ENCODE measurements at regions of chr1 and their contacts with region 1.

Region 1: GRCh38 chr1:110766025-110766647 is 91.4 kb upstream of the KCNA3 start:
- DNase-seq: peak; percentile 58
- H3K4me3 Mint-ChIP-seq: peak overlapping the region; percentile 40
- H3K27ac Mint-ChIP-seq: no peak overlapping the region
- H3K4me1 Mint-ChIP-seq: peaks cover 3% of the 10 kb centered on the region
- H3K27me3 Mint-ChIP-seq: peaks cover 12% of the 10 kb centered on the region

Region 2: GRCh38 chr1:110524311-110525251 is 241.6 kb before region 1 on chr1:
- CTCF ChIA-PET with region 1: interaction called, 25 read pairs
- POLR2A ChIA-PET with region 1: no interaction called
- intact Hi-C with region 1: no loop called
- DNase-seq: peak; percentile 65
- H3K4me3 Mint-ChIP-seq: no peak overlapping the region
- H3K27ac Mint-ChIP-seq: no peak overlapping the region
- H3K4me1 Mint-ChIP-seq: peaks cover 5% of the 10 kb centered on the region
- H3K27me3 Mint-ChIP-seq: peaks cover 17% of the 10 kb centered on the region

Region 3: DNA sequence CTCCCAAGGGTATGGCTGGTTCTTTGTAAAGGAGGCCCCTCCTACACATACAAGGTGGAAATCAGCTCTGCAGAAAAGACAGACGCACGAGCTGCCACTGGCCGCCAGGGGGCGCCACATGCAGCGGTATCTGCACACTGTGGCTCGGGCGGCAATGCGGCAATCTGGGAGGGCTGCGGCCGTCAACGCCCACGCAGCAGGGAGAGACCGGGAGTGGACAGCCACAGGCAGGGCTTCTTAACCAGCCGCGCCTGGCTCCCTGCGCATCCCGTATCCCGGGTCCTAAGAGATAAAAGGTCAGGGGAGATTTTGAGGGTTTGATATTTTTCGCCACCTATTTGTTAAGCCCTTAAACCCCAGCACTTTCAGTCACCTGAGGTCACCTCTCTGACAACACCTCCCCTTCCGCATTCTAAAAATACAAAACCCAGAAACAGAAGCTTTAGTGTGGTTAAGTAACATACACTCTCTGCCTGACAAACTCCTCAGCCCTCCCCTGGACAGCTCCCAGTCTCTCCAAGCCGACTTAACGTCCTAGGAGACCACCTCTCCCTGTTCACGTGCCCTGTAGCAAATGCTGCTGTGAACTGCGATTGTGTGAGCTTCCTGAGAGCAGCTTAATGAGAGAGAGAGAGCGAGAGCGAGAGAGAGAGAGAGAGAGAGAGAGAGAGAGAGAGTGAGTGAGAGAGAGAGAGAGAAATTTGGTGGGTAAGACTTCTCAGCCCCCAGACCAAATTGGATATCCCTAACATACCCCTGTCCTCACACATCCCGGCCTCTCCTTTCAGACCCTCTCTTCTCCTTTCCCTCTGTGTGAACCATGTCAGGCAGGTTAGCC is 146.5 kb before region 1 on chr1:
- CTCF ChIA-PET with region 1: interaction called, 278 read pairs
- POLR2A ChIA-PET with region 1: interaction called, 6 read pairs
- intact Hi-C with region 1: loop called (anchors 1 kb)
- DNase-seq: peak; percentile 93
- H3K4me3 Mint-ChIP-seq: peak overlapping the region; percentile 75
- H3K27ac Mint-ChIP-seq: peak overlapping the region; percentile 79
- H3K4me1 Mint-ChIP-seq: peaks cover 25% of the 10 kb centered on the region
- H3K27me3 Mint-ChIP-seq: no peaks in the 10 kb centered on the region

Region 4: GRCh38 chr1:110645821-110646735 is 120.1 kb before region 1 on chr1:
- CTCF ChIA-PET with region 1: interaction called, 15 read pairs
- POLR2A ChIA-PET with region 1: no interaction called
- intact Hi-C with region 1: no loop called
- DNase-seq: no peak
- H3K4me3 Mint-ChIP-seq: peak overlapping the region; percentile 1
- H3K27ac Mint-ChIP-seq: peak overlapping the region; percentile 70
- H3K4me1 Mint-ChIP-seq: peaks cover 42% of the 10 kb centered on the region
- H3K27me3 Mint-ChIP-seq: no peaks in the 10 kb centered on the region

Region 5: GRCh38 chr1:110674337-110675059 is 91.6 kb before region 1 on chr1 and contains the start of gene KCNA3:
- CTCF ChIA-PET with region 1: interaction called, 17 read pairs
- POLR2A ChIA-PET with region 1: no interaction called
- intact Hi-C with region 1: loop called (anchors 1 kb)
- DNase-seq: peak; percentile 72
- H3K4me3 Mint-ChIP-seq: peak within 1 kb of the TSS; percentile 95
- H3K27ac Mint-ChIP-seq: peak within 1 kb of the TSS; percentile 97
- H3K4me1 Mint-ChIP-seq: peaks cover 29% of the 10 kb centered on the region
- H3K27me3 Mint-ChIP-seq: no peaks in the 10 kb centered on the region
- total RNA-seq, gene KCNA3: 25.2 to 25.6 TPM

Region 6: GRCh38 chr1:110787328-110788071 is 21.4 kb after region 1 on chr1:
- CTCF ChIA-PET with region 1: interaction called, 58 read pairs
- POLR2A ChIA-PET with region 1: no interaction called
- intact Hi-C with region 1: no loop called
- DNase-seq: peak; percentile 38
- H3K4me3 Mint-ChIP-seq: no peak overlapping the region
- H3K27ac Mint-ChIP-seq: peak overlapping the region; percentile 66
- H3K4me1 Mint-ChIP-seq: peaks cover 50% of the 10 kb centered on the region
- H3K27me3 Mint-ChIP-seq: no peaks in the 10 kb centered on the region

Region 7: GRCh38 chr1:110857964-110858948 is 92.1 kb after region 1 on chr1:
- CTCF ChIA-PET with region 1: no interaction called
- POLR2A ChIA-PET with region 1: no interaction called
- intact Hi-C with region 1: no loop called
- DNase-seq: no peak
- H3K4me3 Mint-ChIP-seq: peak overlapping the region; percentile 12
- H3K27ac Mint-ChIP-seq: no peak overlapping the region
- H3K4me1 Mint-ChIP-seq: peaks cover 22% of the 10 kb centered on the region
- H3K27me3 Mint-ChIP-seq: peaks cover 7% of the 10 kb centered on the region